GM12878 (cell line): ENCODE measurements at regions of chr17 and their contacts with region 1.

Region 1: DNA sequence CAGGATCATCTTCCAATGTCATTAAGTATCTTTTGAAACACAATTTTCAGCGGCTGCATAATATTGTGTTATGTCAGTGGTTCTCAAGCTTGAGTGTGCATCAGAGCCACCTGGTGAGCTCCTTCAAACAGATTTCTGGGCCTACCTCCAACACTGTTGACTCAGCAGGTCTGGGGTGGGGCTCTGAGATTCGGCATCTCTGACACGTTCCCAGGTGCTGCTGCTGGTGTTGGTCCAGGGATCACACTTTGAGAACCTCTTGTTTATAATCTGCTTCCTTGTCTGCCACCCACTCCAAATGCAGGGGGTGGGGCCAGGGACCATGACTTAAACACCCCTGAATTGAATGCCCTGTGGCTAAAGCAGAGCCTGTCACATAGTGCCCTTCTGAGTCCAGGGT is 73.8 kb upstream of the HNF1B start:
- DNase-seq: no peak
- ATAC-seq: no peak
- H3K4me3 ChIP-seq: no peak overlapping the region
- H3K27ac ChIP-seq: peak overlapping the region; percentile 30; the same call in 1 of the 2 replicates
- H3K4me1 ChIP-seq: peaks cover 30% of the 10 kb centered on the region
- H3K27me3 ChIP-seq: no peaks in the 10 kb centered on the region
- CTCF ChIP-seq: no peak
- EP300 ChIP-seq: no peak
- POLR2A ChIP-seq: no peak
- RAD21 ChIP-seq: no peak

Region 2: DNA sequence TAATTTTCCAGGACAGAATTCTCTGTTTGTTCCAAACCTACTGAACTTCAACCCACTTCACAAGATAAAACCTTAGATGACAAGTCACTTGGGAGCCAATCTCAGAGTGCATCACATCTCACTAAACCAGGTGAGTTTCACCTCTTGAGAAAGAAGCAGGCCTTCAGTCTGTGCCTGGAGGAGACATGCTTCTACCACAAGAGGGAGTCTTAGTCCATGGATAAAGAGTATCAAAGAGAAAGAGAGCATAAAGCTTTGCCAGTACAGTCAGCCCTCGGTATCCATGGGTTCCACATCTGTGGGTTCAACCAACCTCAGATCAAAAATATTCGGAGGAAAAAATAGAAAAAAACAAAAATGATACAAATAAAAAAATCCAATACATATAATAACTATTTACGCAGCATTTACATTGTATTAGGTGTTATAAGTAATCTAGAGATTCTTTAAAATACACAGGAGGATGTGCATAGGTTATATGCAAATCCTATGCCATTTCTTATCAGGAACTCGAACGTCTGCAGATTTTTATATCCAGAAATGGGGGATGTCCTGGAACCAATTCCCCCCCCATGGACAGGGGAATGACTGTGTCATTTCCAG is 291.3 kb before region 1 on chr17:
- CTCF ChIA-PET with region 1: interaction called, 12 read pairs
- POLR2A ChIA-PET with region 1: no interaction called
- RAD21 ChIA-PET with region 1: interaction called, 7 read pairs
- SMC1A ChIA-PET with region 1: interaction called, 5 read pairs
- in situ Hi-C with region 1: no loop called
- intact Hi-C with region 1: loop called (anchors 1 kb)
- DNase-seq: no peak
- ATAC-seq: peak; percentile 85
- H3K4me3 ChIP-seq: no peak overlapping the region
- H3K27ac ChIP-seq: no peak overlapping the region
- H3K4me1 ChIP-seq: no peaks in the 10 kb centered on the region
- H3K27me3 ChIP-seq: no peaks in the 10 kb centered on the region
- CTCF ChIP-seq: peak; percentile 63 to 69 (median 63)
- EP300 ChIP-seq: no peak
- POLR2A ChIP-seq: no peak
- RAD21 ChIP-seq: peak; percentile 64

Region 3: DNA sequence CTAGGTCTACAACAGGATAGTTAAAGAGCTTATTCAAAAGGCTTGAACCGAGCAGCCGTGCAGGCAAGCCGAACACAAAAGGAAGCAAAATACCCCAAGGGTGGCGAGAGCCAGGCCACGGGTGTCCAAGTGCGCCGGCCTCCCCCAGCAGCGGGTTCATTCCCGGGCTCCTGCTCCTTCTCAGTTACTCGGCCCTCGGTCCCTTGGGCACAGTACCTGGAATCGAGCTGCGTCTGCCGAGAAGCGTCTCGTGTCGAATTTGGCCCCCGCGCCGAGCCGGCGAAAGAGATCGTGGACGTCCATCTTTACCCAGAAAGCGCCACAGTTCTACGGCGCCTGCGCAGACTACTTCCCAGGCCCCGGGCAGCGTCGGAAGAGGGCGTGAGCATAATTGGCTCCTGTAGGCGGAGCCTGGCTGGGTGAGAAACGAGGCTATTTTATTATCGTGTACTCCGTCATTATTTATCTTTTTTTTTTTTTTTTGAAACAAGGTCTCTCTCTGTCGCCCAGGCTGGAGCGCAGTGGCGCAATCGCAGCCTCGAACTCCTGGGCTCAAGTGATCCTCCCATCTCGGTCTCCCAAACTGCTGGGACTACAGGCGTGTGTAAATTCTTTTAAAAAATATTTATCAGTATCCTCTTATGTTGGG is 175.4 kb before region 1 on chr17 and contains the start of gene DDX52:
- CTCF ChIA-PET with region 1: interaction called, 38 read pairs
- POLR2A ChIA-PET with region 1: no interaction called
- RAD21 ChIA-PET with region 1: interaction called, 7 read pairs
- SMC1A ChIA-PET with region 1: interaction called, 17 read pairs
- in situ Hi-C with region 1: no loop called
- intact Hi-C with region 1: no loop called
- DNase-seq: peak; percentile 52
- ATAC-seq: peak; percentile 99
- H3K4me3 ChIP-seq: peak within 1 kb of the TSS; percentile 80
- H3K27ac ChIP-seq: peak within 1 kb of the TSS; percentile 58
- H3K4me1 ChIP-seq: no peaks in the 10 kb centered on the region
- H3K27me3 ChIP-seq: no peaks in the 10 kb centered on the region; a peak in 1 of 4 replicates
- CTCF ChIP-seq: no peak
- EP300 ChIP-seq: no peak
- POLR2A ChIP-seq: peak; percentile 88
- RAD21 ChIP-seq: no peak
- polyA plus RNA-seq, gene DDX52: 18.7 to 18.8 TPM

Region 4: GRCh38 chr17:37650419-37651003 is 168.2 kb before region 1 on chr17:
- CTCF ChIA-PET with region 1: interaction called, 38 read pairs
- POLR2A ChIA-PET with region 1: no interaction called
- RAD21 ChIA-PET with region 1: interaction called, 12 read pairs
- SMC1A ChIA-PET with region 1: interaction called, 17 read pairs
- in situ Hi-C with region 1: no loop called
- intact Hi-C with region 1: no loop called
- DNase-seq: no peak
- ATAC-seq: peak; percentile 52
- H3K4me3 ChIP-seq: no peak overlapping the region
- H3K27ac ChIP-seq: no peak overlapping the region
- H3K4me1 ChIP-seq: no peaks in the 10 kb centered on the region
- H3K27me3 ChIP-seq: no peaks in the 10 kb centered on the region
- CTCF ChIP-seq: peak; percentile 27 to 47 (median 32); a peak in 5 of 6 replicates
- EP300 ChIP-seq: no peak
- POLR2A ChIP-seq: no peak
- RAD21 ChIP-seq: peak; percentile 47

Region 5: GRCh38 chr17:37701496-37701898 is 117.2 kb before region 1 on chr17:
- CTCF ChIA-PET with region 1: interaction called, 39 read pairs
- POLR2A ChIA-PET with region 1: no interaction called
- RAD21 ChIA-PET with region 1: interaction called, 10 read pairs
- SMC1A ChIA-PET with region 1: interaction called, 5 read pairs
- in situ Hi-C with region 1: no loop called
- intact Hi-C with region 1: loop called (anchors 1 kb)
- DNase-seq: peak; percentile 16
- ATAC-seq: peak; percentile 93
- H3K4me3 ChIP-seq: no peak overlapping the region
- H3K27ac ChIP-seq: no peak overlapping the region
- H3K4me1 ChIP-seq: no peaks in the 10 kb centered on the region
- H3K27me3 ChIP-seq: no peaks in the 10 kb centered on the region
- CTCF ChIP-seq: peak; percentile 78 to 81 (median 80)
- EP300 ChIP-seq: no peak
- POLR2A ChIP-seq: no peak
- RAD21 ChIP-seq: peak; percentile 75

Region 6: GRCh38 chr17:37833237-37833859 is 14.7 kb after region 1 on chr17:
- CTCF ChIA-PET with region 1: interaction called, 51 read pairs
- POLR2A ChIA-PET with region 1: interaction called, 6 read pairs
- RAD21 ChIA-PET with region 1: interaction called, 23 read pairs
- SMC1A ChIA-PET with region 1: interaction called, 46 read pairs
- in situ Hi-C with region 1: no loop called
- intact Hi-C with region 1: no loop called
- DNase-seq: peak; percentile 76
- ATAC-seq: peak; percentile 81
- H3K4me3 ChIP-seq: no peak overlapping the region
- H3K27ac ChIP-seq: no peak overlapping the region
- H3K4me1 ChIP-seq: peaks cover 40% of the 10 kb centered on the region
- H3K27me3 ChIP-seq: no peaks in the 10 kb centered on the region
- CTCF ChIP-seq: no peak
- EP300 ChIP-seq: 0 out of 4 replicates have a peak, but pooled peaks of 1 of the 2 experiments have one; percentile 18
- POLR2A ChIP-seq: no peak
- RAD21 ChIP-seq: no peak

Region 7: GRCh38 chr17:37844158-37844976 is 25.7 kb after region 1 on chr17:
- CTCF ChIA-PET with region 1: interaction called, 28 read pairs
- POLR2A ChIA-PET with region 1: interaction called, 4 read pairs
- RAD21 ChIA-PET with region 1: interaction called, 14 read pairs
- SMC1A ChIA-PET with region 1: interaction called, 39 read pairs
- in situ Hi-C with region 1: no loop called
- intact Hi-C with region 1: no loop called
- DNase-seq: no peak
- ATAC-seq: peak; percentile 84
- H3K4me3 ChIP-seq: no peak overlapping the region
- H3K27ac ChIP-seq: no peak overlapping the region
- H3K4me1 ChIP-seq: peaks cover 28% of the 10 kb centered on the region
- H3K27me3 ChIP-seq: no peaks in the 10 kb centered on the region
- CTCF ChIP-seq: peak; percentile 69 to 90 (median 88)
- EP300 ChIP-seq: no peak
- POLR2A ChIP-seq: 0 out of 2 replicates have a peak, but pooled peaks have one; percentile 26
- RAD21 ChIP-seq: peak; percentile 85